Kidney (tissue), 22 donors: ENCODE measurements at regions of chr9 and their contacts with region 1.

Region 1: DNA sequence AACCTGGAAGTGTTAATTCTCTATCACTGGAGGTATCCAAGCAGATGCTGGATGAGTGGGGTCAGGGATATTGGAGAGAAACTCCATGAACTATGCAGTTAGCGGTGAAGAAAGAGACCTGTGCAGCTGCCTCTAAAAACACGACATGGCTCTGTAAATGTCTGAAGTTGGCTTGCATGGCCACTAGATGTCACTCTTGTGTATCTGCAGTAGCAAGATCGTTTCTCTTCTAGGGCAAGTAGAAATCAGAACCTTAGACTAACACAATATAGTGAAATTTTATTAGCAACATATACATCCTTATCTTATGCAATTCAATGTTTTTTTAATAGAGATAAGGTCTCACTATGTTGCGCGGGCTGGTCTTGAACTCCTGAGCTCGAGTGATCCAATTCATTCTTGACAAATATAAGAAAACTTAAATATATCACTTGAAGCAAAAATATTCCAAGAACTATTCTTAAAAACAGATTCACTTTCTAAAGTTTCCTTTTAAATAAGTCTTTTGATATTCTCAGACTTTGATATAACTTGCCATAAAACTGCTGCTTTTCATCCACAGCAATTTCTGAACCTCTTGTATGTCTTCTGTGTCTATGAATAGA is 2.9 kb downstream of the OR2S2 start:
- DNase-seq: peak in 3 of 5 donors; percentile 57 to 87 (median 87)
- H3K4me3 ChIP-seq: peak overlapping the region in 1 of 3 donors; percentile 20
- H3K27ac ChIP-seq: no peak overlapping the region
- H3K4me1 ChIP-seq: peaks cover 0 to 2% (median 0%) of the 10 kb centered on the region in 3 donors
- H3K27me3 ChIP-seq: peaks cover 2% of the 10 kb centered on the region
- CTCF ChIP-seq: peak; percentile 90

Region 2: GRCh38 chr9:36018891-36019720 is 64.1 kb after region 1 on chr9:
- intact Hi-C with region 1: loop called (anchors 5 kb)
- DNase-seq: peak in 2 of 5 donors; percentile 22 to 39
- H3K4me3 ChIP-seq: no peak overlapping the region
- H3K27ac ChIP-seq: no peak overlapping the region
- H3K4me1 ChIP-seq: no peaks in the 10 kb centered on the region
- H3K27me3 ChIP-seq: no peaks in the 10 kb centered on the region
- CTCF ChIP-seq: no peak